Activated B cell treated with CpG ODN at 0.5 μM for 24 hours (primary cell): ENCODE measurements at regions of chr10 and their contacts with region 1.

Region 1: GRCh38 chr10:114103284-114103683 is 59.6 kb downstream of the ADRB1 start:
- DNase-seq: no peak
- ATAC-seq: no peak
- H3K4me3 Mint-ChIP-seq: no peak overlapping the region
- H3K27ac Mint-ChIP-seq: no peak overlapping the region
- H3K4me1 Mint-ChIP-seq: peaks cover 41% of the 10 kb centered on the region
- H3K27me3 Mint-ChIP-seq: peaks cover 15% of the 10 kb centered on the region
- CTCF ChIP-seq: no peak

Region 2: DNA sequence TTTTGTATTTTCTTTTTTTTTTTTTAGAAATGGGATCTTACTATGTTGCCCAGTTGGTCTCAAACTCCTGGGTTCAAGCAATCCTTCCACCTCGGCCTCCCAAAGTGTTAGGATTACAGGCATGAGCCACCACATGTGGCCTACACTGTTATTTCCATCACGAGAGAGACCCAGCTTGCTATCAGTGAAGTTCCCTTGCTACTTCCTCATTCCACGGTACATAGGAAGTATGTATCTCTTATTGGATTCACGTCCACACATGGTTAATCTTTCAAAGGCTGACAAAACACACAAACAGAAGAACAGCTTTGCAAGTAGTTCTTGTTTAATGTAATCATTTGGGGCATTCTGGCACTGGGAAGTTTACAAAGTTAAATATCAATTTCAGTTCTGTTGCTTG is 300.3 kb before region 1 on chr10:
- CTCF ChIA-PET with region 1: interaction called, 106 read pairs
- POLR2A ChIA-PET with region 1: no interaction called
- intact Hi-C with region 1: loop called (anchors 1 kb)
- DNase-seq: no peak
- ATAC-seq: no peak
- H3K4me3 Mint-ChIP-seq: no peak overlapping the region
- H3K27ac Mint-ChIP-seq: no peak overlapping the region
- H3K4me1 Mint-ChIP-seq: peaks cover 7% of the 10 kb centered on the region
- H3K27me3 Mint-ChIP-seq: peaks cover 3% of the 10 kb centered on the region
- CTCF ChIP-seq: no peak

Region 3: GRCh38 chr10:113872139-113873030 is 230.9 kb before region 1 on chr10:
- CTCF ChIA-PET with region 1: interaction called, 16 read pairs
- POLR2A ChIA-PET with region 1: no interaction called
- intact Hi-C with region 1: loop called (anchors 2 kb)
- DNase-seq: no peak
- ATAC-seq: no peak
- H3K4me3 Mint-ChIP-seq: no peak overlapping the region
- H3K27ac Mint-ChIP-seq: no peak overlapping the region
- H3K4me1 Mint-ChIP-seq: peaks cover 25% of the 10 kb centered on the region
- H3K27me3 Mint-ChIP-seq: no peaks in the 10 kb centered on the region
- CTCF ChIP-seq: no peak

Region 4: DNA sequence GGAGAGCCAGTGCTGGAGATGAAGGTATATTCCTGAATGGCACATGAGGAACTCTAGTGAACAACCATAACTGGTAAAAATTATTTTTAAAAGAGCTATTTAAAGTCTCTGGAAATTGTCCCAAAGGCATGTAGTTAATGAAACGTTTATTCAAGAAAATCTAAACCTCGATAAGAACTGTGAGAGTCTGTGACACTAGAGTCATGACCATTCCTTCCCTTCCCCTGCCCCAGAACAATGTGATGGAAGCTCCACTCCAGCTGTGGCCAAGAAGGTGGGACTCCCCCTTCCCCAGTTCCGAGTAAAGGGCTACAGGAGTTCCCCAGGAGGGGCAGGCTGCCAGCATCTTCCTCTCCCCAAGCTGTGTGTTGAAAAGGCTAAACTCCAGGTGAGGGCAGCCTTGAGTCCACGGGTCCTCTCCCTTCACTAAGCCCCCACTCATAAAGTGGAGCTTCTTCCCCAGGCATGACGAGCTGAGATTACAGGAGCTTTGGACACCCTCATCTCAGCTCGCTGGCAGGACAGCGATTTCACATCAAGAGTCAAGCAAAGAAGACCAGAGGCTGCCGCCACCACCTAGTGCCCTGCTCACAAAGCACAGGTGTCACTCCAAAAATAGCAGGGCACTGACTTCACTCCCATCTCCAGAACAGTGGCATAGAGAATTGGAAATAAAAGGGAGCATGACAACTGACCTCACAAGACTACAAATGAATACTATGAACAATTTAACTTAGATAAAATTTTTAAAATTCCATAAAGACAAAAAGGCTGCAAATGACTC is 180.3 kb before region 1 on chr10:
- CTCF ChIA-PET with region 1: no interaction called
- POLR2A ChIA-PET with region 1: no interaction called
- intact Hi-C with region 1: loop called (anchors 5 kb)
- DNase-seq: no peak
- ATAC-seq: no peak
- H3K4me3 Mint-ChIP-seq: no peak overlapping the region
- H3K27ac Mint-ChIP-seq: no peak overlapping the region
- H3K4me1 Mint-ChIP-seq: no peaks in the 10 kb centered on the region
- H3K27me3 Mint-ChIP-seq: peaks cover 13% of the 10 kb centered on the region
- CTCF ChIP-seq: no peak

Region 5: DNA sequence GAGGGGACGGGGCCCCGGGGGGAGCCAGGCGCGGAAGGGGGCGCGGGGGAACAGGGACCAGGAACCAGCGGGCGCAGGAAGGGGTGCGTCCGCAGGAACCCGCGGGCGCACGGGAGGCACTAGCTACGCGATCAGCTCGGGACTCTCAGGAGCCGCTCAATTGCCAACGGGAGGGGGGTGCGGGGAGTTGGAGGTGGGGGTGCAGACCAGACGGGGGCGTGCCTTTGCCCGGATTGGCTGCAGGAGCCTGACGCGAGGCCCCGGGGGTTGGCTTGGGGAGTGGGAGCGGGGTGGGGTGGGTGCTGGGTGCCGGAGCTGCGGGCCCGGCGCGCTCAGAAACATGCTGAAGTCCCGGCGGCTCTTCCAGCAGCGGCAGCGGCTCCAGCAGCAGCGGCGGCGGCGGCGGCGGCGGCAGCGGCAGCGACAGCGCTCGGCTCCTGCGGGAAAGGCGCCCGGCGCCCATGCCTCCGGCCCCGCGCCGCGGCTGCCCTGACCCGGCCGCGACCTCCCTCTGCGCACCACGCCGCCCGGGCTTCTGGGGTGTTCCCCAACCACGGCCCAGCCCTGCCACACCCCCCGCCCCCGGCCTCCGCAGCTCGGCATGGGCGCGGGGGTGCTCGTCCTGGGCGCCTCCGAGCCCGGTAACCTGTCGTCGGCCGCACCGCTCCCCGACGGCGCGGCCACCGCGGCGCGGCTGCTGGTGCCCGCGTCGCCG is 59.6 kb before region 1 on chr10 and contains the start of gene ADRB1:
- CTCF ChIA-PET with region 1: no interaction called
- POLR2A ChIA-PET with region 1: no interaction called
- intact Hi-C with region 1: loop called (anchors 5 kb)
- DNase-seq: no peak
- ATAC-seq: peak; percentile 20
- H3K4me3 Mint-ChIP-seq: peak within 1 kb of the TSS; percentile 75
- H3K27ac Mint-ChIP-seq: no peak within 1 kb of the TSS
- H3K4me1 Mint-ChIP-seq: peaks cover 21% of the 10 kb centered on the region
- H3K27me3 Mint-ChIP-seq: peaks cover 56% of the 10 kb centered on the region
- CTCF ChIP-seq: no peak
- total RNA-seq, gene ADRB1: not detected in 2 replicates